ENCODE measurements at regions of chr9 and their contacts with region 1.

Region 1: DNA sequence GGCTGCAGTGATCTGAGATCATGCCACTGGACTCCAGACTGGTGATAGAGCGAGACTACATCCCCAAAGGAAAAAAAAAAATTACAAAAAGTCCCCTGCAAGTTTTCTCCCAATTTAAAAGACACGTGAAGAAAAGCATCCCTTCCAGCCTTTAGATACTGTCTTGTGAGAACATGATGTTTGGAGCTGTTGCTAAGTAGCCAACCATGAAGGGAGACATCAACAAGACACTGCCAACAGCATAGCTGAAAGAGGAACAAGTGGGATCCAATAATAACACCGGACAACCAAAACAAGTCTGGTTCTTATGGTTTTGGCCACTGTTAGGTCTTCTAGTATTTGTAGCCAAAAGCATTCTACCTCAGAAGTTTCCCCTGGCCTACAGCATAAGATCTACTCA is 118.9 kb upstream of the CCDC180 start:
- DNase-seq: no peak
- ATAC-seq: no peak
- H3K4me3 ChIP-seq: no peak overlapping the region
- H3K4me3 Mint-ChIP-seq: no peak overlapping the region
- H3K27ac ChIP-seq: no peak overlapping the region
- H3K27ac Mint-ChIP-seq: no peak overlapping the region
- H3K4me1 ChIP-seq: no peaks in the 10 kb centered on the region
- H3K4me1 Mint-ChIP-seq: no peaks in the 10 kb centered on the region
- H3K27me3 ChIP-seq: peaks cover 3% of the 10 kb centered on the region
- H3K27me3 Mint-ChIP-seq: peaks cover 0 to 12% of the 10 kb centered on the region in 2 donors
- CTCF ChIP-seq: no peak

Region 2: DNA sequence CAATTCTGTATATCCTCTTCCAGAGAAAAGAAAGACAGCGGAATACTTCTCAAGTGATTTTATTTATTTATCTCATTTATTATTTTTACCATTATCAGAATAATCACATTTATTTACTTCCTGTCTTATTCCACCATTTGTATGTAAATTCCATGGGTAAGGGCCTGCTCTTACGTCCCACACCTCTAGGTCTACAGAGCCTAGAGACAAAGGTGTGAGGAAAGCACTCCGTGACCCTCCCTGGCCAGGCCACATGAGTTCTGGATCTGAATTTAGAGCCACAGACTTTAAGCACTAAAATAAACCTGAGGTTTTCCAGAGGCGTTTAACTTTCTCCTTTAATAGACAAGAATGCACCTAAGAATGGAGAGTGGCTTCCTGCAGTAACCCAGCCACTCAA is 64.3 kb before region 1 on chr9:
- intact Hi-C with region 1: no loop called
- DNase-seq: no peak
- ATAC-seq: no peak
- H3K4me3 ChIP-seq: no peak overlapping the region
- H3K4me3 Mint-ChIP-seq: no peak overlapping the region
- H3K27ac ChIP-seq: no peak overlapping the region
- H3K27ac Mint-ChIP-seq: no peak overlapping the region
- H3K4me1 ChIP-seq: no peaks in the 10 kb centered on the region
- H3K4me1 Mint-ChIP-seq: no peaks in the 10 kb centered on the region
- H3K27me3 ChIP-seq: no peaks in the 10 kb centered on the region
- H3K27me3 Mint-ChIP-seq: peaks cover 0 to 22% of the 10 kb centered on the region in 2 donors
- CTCF ChIP-seq: no peak

Region 3: DNA sequence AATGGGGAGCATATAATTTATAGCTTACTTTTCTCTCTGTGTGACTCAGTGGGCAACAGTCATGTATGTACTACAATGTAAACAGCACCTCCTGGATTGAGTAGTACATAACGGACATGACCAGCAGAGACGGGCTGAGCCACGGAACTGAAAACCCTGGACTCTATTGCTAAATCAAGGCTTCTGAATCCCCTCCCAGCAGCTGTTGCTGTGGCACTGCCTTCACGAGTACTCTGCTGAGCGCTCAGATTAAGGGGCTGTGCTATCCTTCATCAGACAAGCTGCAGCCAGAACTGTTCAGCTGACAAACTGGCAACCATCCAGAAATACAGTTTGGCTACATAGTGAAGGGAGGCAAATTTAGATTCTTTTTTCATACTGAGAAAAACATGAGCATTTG is 12.3 kb before region 1 on chr9:
- intact Hi-C with region 1: loop called (anchors 1 kb)
- DNase-seq: no peak
- ATAC-seq: no peak
- H3K4me3 ChIP-seq: no peak overlapping the region
- H3K4me3 Mint-ChIP-seq: no peak overlapping the region
- H3K27ac ChIP-seq: no peak overlapping the region
- H3K27ac Mint-ChIP-seq: no peak overlapping the region
- H3K4me1 ChIP-seq: no peaks in the 10 kb centered on the region
- H3K4me1 Mint-ChIP-seq: no peaks in the 10 kb centered on the region
- H3K27me3 ChIP-seq: no peaks in the 10 kb centered on the region
- H3K27me3 Mint-ChIP-seq: peaks cover 2 to 39% of the 10 kb centered on the region in 2 donors
- CTCF ChIP-seq: no peak

Region 4: DNA sequence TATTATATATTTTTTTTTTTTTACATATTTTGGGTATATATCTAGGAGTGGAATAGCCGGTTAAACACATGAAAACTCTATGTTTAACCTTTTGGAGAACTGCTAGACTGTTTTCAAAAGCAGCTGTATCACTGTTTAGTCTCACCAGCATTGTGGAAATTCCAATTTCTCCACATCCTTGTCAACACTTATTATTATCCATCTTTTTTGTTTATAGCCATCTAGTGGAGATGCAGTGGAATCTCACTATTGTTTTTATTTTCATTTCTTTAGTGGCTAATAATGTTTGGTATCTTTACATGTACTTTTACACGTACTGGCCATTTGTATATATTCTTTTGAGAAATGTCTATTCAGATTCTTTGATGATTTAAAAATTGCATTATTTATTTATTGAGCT is 96.3 kb after region 1 on chr9:
- intact Hi-C with region 1: no loop called
- DNase-seq: no peak
- ATAC-seq: no peak
- H3K4me3 ChIP-seq: no peak overlapping the region
- H3K4me3 Mint-ChIP-seq: no peak overlapping the region
- H3K27ac ChIP-seq: no peak overlapping the region
- H3K27ac Mint-ChIP-seq: no peak overlapping the region
- H3K4me1 ChIP-seq: no peaks in the 10 kb centered on the region
- H3K4me1 Mint-ChIP-seq: no peaks in the 10 kb centered on the region
- H3K27me3 ChIP-seq: no peaks in the 10 kb centered on the region
- H3K27me3 Mint-ChIP-seq: no peaks in the 10 kb centered on the region
- CTCF ChIP-seq: no peak